ENCODE measurements at regions of chr17 and their contacts with region 1.

Region 1: GRCh38 chr17:81512560-81513371 is at the start of gene ACTG1:
- DNase-seq: peak in 1 of 2 experiments; percentile 91
- H3K4me3 ChIP-seq: peak within 1 kb of the TSS; percentile 75 to 93 (median 90)
- H3K27ac ChIP-seq: peak within 1 kb of the TSS; percentile 89
- H3K4me1 ChIP-seq: peaks cover 0 to 20% (median 11%) of the 10 kb centered on the region in 4 experiments; a peak in 5 of 7 replicates
- H3K27me3 ChIP-seq: peaks cover 0 to 3% (median under 1%) of the 10 kb centered on the region in 4 experiments; a peak in 2 of 7 replicates
- CTCF ChIP-seq: no peak
- EP300 ChIP-seq: peak in 1 of 2 experiments; percentile 64; a peak in 1 of 3 replicates
- POLR2A ChIP-seq: peak; percentile 97
- RAD21 ChIP-seq: no peak
- total RNA-seq, gene ACTG1: 3,535 and 3,691 TPM in 2 replicates

Region 2: GRCh38 chr17:81294856-81295680 is 217.7 kb before region 1 on chr17 and contains the start of gene SLC38A10:
- CTCF ChIA-PET with region 1: interaction called, 4 read pairs
- POLR2A ChIA-PET with region 1: interaction called, 12 read pairs
- DNase-seq: peak; percentile 21 to 92
- H3K4me3 ChIP-seq: peak within 1 kb of the TSS; percentile 65 to 89 (median 74)
- H3K27ac ChIP-seq: peak within 1 kb of the TSS; percentile 29; the same call in 1 of the 2 replicates
- H3K4me1 ChIP-seq: peaks cover 3 to 6% (median 4%) of the 10 kb centered on the region in 4 experiments; a peak in 5 of 7 replicates
- H3K27me3 ChIP-seq: no peaks in the 10 kb centered on the region
- CTCF ChIP-seq: 0 out of 4 replicates have a peak, but pooled peaks of 1 of the 3 experiments have one; percentile 1
- EP300 ChIP-seq: no peak
- POLR2A ChIP-seq: peak in 1 of 2 experiments; percentile 81; a peak in 2 of 3 replicates
- RAD21 ChIP-seq: no peak
- total RNA-seq, gene SLC38A10: 35.7 and 41.0 TPM in 2 replicates

Region 3: DNA sequence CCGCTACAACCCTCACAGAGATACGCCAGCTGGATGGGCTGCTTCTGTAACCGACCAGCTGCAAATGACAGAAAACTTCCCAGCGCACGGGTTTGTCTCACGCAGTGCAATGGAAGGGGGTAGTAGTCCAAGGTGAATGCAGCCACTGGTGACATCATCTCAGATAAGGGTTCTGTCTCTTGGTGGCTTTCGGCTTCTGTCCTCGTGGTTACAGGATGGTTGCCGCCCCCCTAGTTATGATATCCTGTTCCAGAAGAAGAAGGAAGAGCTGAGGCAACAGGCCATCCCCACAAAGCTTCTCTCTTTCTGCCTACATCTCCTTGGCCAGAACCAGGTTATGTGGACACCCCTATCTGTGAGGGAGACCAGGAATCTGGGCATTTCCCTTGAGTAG is 157.8 kb before region 1 on chr17:
- CTCF ChIA-PET with region 1: no interaction called
- POLR2A ChIA-PET with region 1: no interaction called
- DNase-seq: no peak
- H3K4me3 ChIP-seq: no peak overlapping the region
- H3K27ac ChIP-seq: no peak overlapping the region
- H3K4me1 ChIP-seq: peaks cover 0 to 6% (median 0%) of the 10 kb centered on the region in 4 experiments; a peak in 1 of 7 replicates
- H3K27me3 ChIP-seq: peaks cover 0 to 2% (median 1%) of the 10 kb centered on the region in 4 experiments; a peak in 3 of 7 replicates
- CTCF ChIP-seq: no peak
- EP300 ChIP-seq: no peak
- POLR2A ChIP-seq: no peak
- RAD21 ChIP-seq: no peak

Region 4: GRCh38 chr17:81394921-81395599 is 117.7 kb before region 1 on chr17 and contains the start of gene BAHCC1:
- CTCF ChIA-PET with region 1: interaction called, 3 read pairs
- POLR2A ChIA-PET with region 1: interaction called, 21 read pairs
- DNase-seq: peak; percentile 95 to 97
- H3K4me3 ChIP-seq: peak within 1 kb of the TSS; percentile 37 to 65 (median 47)
- H3K27ac ChIP-seq: no peak within 1 kb of the TSS
- H3K4me1 ChIP-seq: peaks cover 6 to 33% (median 27%) of the 10 kb centered on the region in 4 experiments
- H3K27me3 ChIP-seq: peaks cover 43 to 62% (median 55%) of the 10 kb centered on the region in 4 experiments; a peak in 6 of 7 replicates
- CTCF ChIP-seq: 0 out of 4 replicates have a peak, but pooled peaks of 1 of the 3 experiments have one; percentile 1
- EP300 ChIP-seq: no peak
- POLR2A ChIP-seq: no peak
- RAD21 ChIP-seq: no peak
- total RNA-seq, gene BAHCC1: 0.58 and 0.71 TPM in 2 replicates

Region 5: DNA sequence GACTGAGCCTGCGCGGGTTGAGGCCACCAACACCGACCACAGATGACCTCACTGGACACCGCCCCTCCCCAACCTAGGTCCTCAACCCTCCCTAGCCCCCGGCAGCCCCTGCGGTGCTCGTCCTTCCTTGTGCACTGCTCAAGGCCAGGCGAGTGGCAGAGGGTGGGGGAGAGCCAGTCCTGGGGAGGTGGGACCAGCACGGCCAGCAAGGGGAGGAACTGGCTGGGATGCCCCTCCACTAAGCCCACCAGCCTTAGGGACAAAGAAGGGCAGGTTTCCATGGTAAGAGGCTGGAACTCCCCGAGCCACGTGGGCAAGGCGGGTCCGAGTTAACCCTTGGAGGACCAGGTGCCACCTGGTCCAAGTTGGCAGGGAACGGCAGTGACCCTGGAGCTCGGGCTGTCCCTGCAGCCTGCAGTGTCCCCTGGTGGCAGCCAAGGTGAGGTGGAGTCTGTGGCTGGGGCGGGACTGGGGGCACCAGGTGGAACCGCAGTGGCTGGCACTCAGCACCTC is 24.6 kb after region 1 on chr17:
- CTCF ChIA-PET with region 1: interaction called, 33 read pairs
- POLR2A ChIA-PET with region 1: interaction called, 125 read pairs
- DNase-seq: peak in 1 of 2 experiments; percentile 86
- H3K4me3 ChIP-seq: peak overlapping the region in 1 of 4 experiments; percentile 51; a peak in 4 of 8 replicates
- H3K27ac ChIP-seq: no peak overlapping the region
- H3K4me1 ChIP-seq: peaks cover 0 to 11% (median 5%) of the 10 kb centered on the region in 4 experiments; a peak in 5 of 7 replicates
- H3K27me3 ChIP-seq: peaks cover 8 to 28% (median 24%) of the 10 kb centered on the region in 4 experiments; a peak in 6 of 7 replicates
- CTCF ChIP-seq: peak; percentile 91 to 97 (median 94)
- EP300 ChIP-seq: no peak
- POLR2A ChIP-seq: no peak; a peak in 1 of 3 replicates
- RAD21 ChIP-seq: peak; percentile 86 to 91

Region 6: DNA sequence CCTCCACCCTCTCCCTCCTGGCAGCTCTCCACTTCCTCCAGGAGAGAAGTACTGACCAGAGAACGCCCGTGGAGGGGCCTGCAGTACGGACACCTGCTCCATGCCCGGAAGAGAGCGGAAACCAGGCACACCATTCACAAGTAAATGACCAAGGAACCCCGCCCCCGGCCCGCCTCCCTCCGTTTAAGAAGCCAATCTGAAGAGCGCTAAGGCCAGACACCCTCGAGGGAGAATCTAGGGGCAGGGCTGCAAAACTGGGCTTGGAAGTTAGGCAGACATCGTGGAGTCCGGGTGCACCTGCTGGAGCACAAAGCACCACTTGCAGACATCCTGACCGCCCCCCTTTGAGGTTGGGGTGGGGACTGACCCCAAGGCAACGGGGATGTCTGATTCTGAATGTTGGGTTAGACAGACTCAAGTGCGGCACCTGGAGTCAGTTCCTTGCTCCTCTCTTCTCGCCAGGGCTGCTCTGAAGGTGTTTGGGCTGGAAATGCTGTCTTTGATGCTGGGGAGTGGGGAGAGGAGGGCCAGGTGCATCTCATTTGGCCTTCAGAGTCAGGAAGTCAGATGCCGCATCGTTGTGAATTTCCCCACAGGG is 40.4 kb after region 1 on chr17:
- CTCF ChIA-PET with region 1: no interaction called
- POLR2A ChIA-PET with region 1: interaction called, 19 read pairs
- DNase-seq: peak; percentile 58 to 83
- H3K4me3 ChIP-seq: peak overlapping the region; percentile 69 to 94 (median 84)
- H3K27ac ChIP-seq: peak overlapping the region; percentile 13; the same call in 1 of the 2 replicates
- H3K4me1 ChIP-seq: peaks cover 3 to 17% (median 8%) of the 10 kb centered on the region in 4 experiments
- H3K27me3 ChIP-seq: no peaks in the 10 kb centered on the region
- CTCF ChIP-seq: peak in 1 of 3 experiments; percentile 19; a peak in 1 of 4 replicates
- EP300 ChIP-seq: no peak
- POLR2A ChIP-seq: peak in 1 of 2 experiments; percentile 63; a peak in 1 of 3 replicates
- RAD21 ChIP-seq: no peak

Region 7: GRCh38 chr17:81566461-81567126 is 53.8 kb after region 1 on chr17:
- CTCF ChIA-PET with region 1: no interaction called
- POLR2A ChIA-PET with region 1: no interaction called
- DNase-seq: no peak
- H3K4me3 ChIP-seq: no peak overlapping the region
- H3K27ac ChIP-seq: no peak overlapping the region
- H3K4me1 ChIP-seq: no peaks in the 10 kb centered on the region
- H3K27me3 ChIP-seq: no peaks in the 10 kb centered on the region
- CTCF ChIP-seq: no peak
- EP300 ChIP-seq: no peak
- POLR2A ChIP-seq: no peak
- RAD21 ChIP-seq: no peak

Region 8: DNA sequence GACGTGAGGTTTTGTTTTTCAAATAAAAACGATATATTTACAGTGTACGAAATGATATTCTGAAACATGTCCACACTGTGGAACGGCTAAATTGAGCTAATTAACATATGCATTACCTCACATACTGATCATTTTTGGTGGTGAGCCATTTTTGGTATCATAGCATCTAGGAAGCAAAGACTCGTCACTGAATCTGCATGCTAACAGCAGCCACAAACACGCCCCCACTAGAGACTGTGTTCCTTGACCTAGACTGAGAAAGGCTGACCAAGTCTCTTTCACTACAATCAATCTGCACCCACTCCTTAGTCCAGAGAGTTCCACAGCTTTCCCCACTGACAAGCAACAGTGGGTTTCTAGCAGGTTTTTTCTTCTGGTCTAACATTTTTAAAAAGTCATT is 94.7 kb after region 1 on chr17:
- CTCF ChIA-PET with region 1: no interaction called
- POLR2A ChIA-PET with region 1: no interaction called
- DNase-seq: no peak
- H3K4me3 ChIP-seq: no peak overlapping the region
- H3K27ac ChIP-seq: no peak overlapping the region
- H3K4me1 ChIP-seq: no peaks in the 10 kb centered on the region
- H3K27me3 ChIP-seq: no peaks in the 10 kb centered on the region
- CTCF ChIP-seq: no peak
- EP300 ChIP-seq: no peak
- POLR2A ChIP-seq: no peak
- RAD21 ChIP-seq: no peak